ENCODE measurements at regions of chr1 and their contacts with region 1.

Region 1: DNA sequence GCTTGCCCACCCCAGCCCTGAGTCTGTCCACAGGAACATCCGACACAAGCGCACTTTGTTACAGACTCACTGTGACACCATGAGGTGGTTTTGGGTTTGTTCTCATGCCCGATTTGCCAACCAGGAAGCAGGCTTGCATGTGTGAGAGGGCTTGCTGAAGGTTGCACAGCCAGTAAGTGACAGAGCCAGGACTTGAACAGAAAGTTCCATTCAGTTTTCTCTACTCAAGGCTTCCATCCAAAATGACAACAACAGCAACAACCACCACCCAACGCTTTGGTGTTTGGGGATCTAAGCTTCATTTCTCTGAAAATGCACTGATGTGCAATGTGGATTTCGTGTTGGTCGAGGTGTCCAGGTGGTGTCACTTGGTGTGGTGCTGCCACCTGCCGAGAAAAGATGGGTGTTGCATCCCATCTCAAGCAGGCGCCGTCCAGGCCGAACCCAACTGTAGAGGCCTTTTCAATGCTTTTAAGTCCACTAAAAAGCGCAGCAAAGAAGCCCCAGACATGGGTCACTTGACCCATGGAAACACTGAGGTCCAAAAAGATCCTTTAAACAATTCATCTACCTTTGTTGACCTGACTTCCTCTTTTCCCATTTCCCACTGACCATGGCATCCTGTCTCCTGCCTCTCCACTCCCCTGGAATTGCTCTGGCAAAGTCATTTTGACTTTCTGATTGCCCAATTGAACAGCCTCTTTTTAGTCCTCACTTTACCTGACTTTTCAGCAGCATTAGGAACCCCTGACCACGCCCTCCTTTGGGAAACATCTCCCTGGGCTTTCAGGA is 12.2 kb downstream of the CITED4 start:
- DNase-seq: peak; percentile 87
- ATAC-seq: peak; percentile 91
- H3K4me3 Mint-ChIP-seq: no peak overlapping the region
- H3K27ac Mint-ChIP-seq: peak overlapping the region; percentile 40
- H3K4me1 Mint-ChIP-seq: peaks cover 22% of the 10 kb centered on the region
- H3K27me3 Mint-ChIP-seq: no peaks in the 10 kb centered on the region

Region 2: DNA sequence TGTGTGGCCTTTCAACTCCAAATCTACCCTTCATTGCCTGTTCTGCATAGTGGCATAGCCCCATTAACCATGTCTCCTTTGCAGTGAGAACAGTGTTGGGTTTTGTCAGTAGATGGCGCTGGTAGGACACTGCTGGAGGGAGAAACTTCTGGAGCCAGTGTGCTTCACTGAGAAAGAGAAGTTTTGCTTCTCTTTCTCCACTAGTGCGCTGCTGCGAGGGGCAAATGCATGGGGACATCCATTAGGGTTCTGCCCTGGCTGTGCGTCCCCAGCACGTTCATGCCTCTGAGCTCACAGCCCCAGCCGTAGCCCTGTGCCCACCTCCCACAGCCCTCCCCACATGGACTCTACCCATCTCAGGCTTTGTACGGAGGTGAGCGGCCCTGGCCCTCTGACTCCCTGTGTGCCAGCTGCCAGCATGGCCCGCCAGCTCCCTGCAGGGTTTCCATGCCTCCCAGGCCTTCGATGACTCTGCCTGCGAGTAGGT is 237.6 kb before region 1 on chr1:
- CTCF ChIA-PET with region 1: interaction called, 11 read pairs
- DNase-seq: peak; percentile 84
- ATAC-seq: peak; percentile 89
- H3K4me3 Mint-ChIP-seq: no peak overlapping the region
- H3K27ac Mint-ChIP-seq: no peak overlapping the region
- H3K4me1 Mint-ChIP-seq: no peaks in the 10 kb centered on the region
- H3K27me3 Mint-ChIP-seq: peaks cover 9% of the 10 kb centered on the region

Region 3: GRCh38 chr1:40691538-40692428 is 158.2 kb before region 1 on chr1 and contains the start of gene NFYC:
- CTCF ChIA-PET with region 1: interaction called, 14 read pairs
- DNase-seq: peak; percentile 99
- ATAC-seq: peak; percentile 88
- H3K4me3 Mint-ChIP-seq: peak within 1 kb of the TSS; percentile 90
- H3K27ac Mint-ChIP-seq: peak within 1 kb of the TSS; percentile 90
- H3K4me1 Mint-ChIP-seq: peaks cover 56% of the 10 kb centered on the region
- H3K27me3 Mint-ChIP-seq: no peaks in the 10 kb centered on the region
- total RNA-seq, gene NFYC: 71.1 to 91.2 TPM

Region 4: GRCh38 chr1:40755067-40755466 is 94.9 kb before region 1 on chr1:
- CTCF ChIA-PET with region 1: interaction called, 10 read pairs
- DNase-seq: no peak
- ATAC-seq: no peak
- H3K4me3 Mint-ChIP-seq: no peak overlapping the region
- H3K27ac Mint-ChIP-seq: no peak overlapping the region
- H3K4me1 Mint-ChIP-seq: peaks cover 30% of the 10 kb centered on the region
- H3K27me3 Mint-ChIP-seq: no peaks in the 10 kb centered on the region

Region 5: GRCh38 chr1:40774266-40774998 is 75.6 kb before region 1 on chr1:
- CTCF ChIA-PET with region 1: interaction called, 228 read pairs
- DNase-seq: peak; percentile 75
- ATAC-seq: peak; percentile 79
- H3K4me3 Mint-ChIP-seq: no peak overlapping the region
- H3K27ac Mint-ChIP-seq: peak overlapping the region; percentile 29
- H3K4me1 Mint-ChIP-seq: peaks cover 24% of the 10 kb centered on the region
- H3K27me3 Mint-ChIP-seq: no peaks in the 10 kb centered on the region

Region 6: GRCh38 chr1:40825435-40825788 is 24.6 kb before region 1 on chr1:
- CTCF ChIA-PET with region 1: interaction called, 12 read pairs
- DNase-seq: no peak
- ATAC-seq: peak; percentile 52
- H3K4me3 Mint-ChIP-seq: no peak overlapping the region
- H3K27ac Mint-ChIP-seq: peak overlapping the region; percentile 16
- H3K4me1 Mint-ChIP-seq: peaks cover 19% of the 10 kb centered on the region
- H3K27me3 Mint-ChIP-seq: no peaks in the 10 kb centered on the region

Region 7: GRCh38 chr1:40862008-40862863 is 12.2 kb after region 1 on chr1 and contains the start of gene CITED4:
- CTCF ChIA-PET with region 1: interaction called, 23 read pairs
- DNase-seq: peak; percentile 97
- ATAC-seq: peak; percentile 92
- H3K4me3 Mint-ChIP-seq: peak within 1 kb of the TSS; percentile 82
- H3K27ac Mint-ChIP-seq: peak within 1 kb of the TSS; percentile 97
- H3K4me1 Mint-ChIP-seq: peaks cover 22% of the 10 kb centered on the region
- H3K27me3 Mint-ChIP-seq: peaks cover 30% of the 10 kb centered on the region
- total RNA-seq, gene CITED4: 2.9 to 4.4 TPM

Measured in activated CD8-positive, alpha-beta memory T cell treated with anti-CD3 and anti-CD28 coated beads, Interleukin-2, amount 10 ng/mL, durations not matched to agents 7 days and 5 days (primary cell).